ENCODE measurements at regions of chr9 and their contacts with region 1.

Region 1: GRCh38 chr9:103104101-103104500 is 109.0 kb downstream of the CYLC2 start:
- DNase-seq: no peak
- H3K4me3 ChIP-seq: no peak overlapping the region
- H3K27ac ChIP-seq: no peak overlapping the region
- H3K4me1 ChIP-seq: no peaks in the 10 kb centered on the region
- H3K27me3 ChIP-seq: no peaks in the 10 kb centered on the region
- CTCF ChIP-seq: no peak

Region 2: DNA sequence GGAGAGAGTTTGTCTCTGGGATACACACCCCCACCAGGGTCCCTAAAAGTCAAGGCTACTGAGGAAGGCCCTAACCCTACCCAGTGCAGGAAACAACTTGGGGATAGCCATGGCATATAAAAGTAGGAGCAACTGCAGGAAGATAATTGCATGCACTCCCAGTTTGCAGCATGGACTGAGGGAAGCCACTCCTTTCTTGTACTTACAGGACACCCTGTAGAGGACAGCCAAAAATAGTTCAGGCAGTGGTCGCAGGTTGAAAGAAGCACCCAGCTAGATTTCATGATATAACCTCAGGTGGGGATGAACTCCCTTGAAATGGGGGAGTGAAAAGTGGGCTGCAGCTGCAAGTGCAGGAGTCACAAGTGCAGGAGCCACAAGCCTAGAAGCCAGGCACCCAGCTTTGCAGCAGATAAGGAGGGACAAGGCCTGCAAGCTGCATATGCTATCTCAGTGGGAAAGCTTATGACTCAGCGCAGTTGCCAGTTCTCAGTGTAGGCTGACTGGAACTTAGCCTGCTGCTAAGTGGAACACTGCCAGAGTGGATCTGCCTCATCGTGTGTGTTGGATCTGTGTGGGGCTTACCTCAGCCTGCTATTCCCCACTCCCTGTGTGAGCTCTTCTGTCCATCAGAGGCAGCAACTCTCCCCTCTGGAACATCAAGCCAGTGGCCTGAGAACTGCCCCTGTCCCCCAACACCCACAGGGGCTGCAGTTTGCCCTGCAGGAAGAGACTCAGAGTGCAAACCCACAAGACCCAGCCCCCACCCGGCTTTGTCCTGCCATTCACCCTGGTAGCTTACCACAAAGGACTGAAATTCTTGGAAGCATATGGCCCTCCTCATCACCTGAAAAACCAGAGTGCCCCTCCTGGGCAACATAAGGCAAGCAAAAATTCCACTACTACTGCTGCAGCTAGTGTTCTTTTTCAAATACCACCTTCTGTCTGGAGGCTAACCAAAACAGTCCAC is 66.3 kb before region 1 on chr9:
- CTCF ChIA-PET with region 1: no interaction called
- POLR2A ChIA-PET with region 1: no interaction called
- intact Hi-C with region 1: loop called (anchors 10 kb)
- DNase-seq: no peak
- H3K4me3 ChIP-seq: no peak overlapping the region
- H3K27ac ChIP-seq: no peak overlapping the region
- H3K4me1 ChIP-seq: no peaks in the 10 kb centered on the region
- H3K27me3 ChIP-seq: no peaks in the 10 kb centered on the region
- CTCF ChIP-seq: no peak

Region 3: GRCh38 chr9:103242025-103242424 is 137.9 kb after region 1 on chr9:
- CTCF ChIA-PET with region 1: no interaction called
- POLR2A ChIA-PET with region 1: no interaction called
- intact Hi-C with region 1: no loop called
- DNase-seq: no peak
- H3K4me3 ChIP-seq: no peak overlapping the region
- H3K27ac ChIP-seq: no peak overlapping the region
- H3K4me1 ChIP-seq: no peaks in the 10 kb centered on the region
- H3K27me3 ChIP-seq: no peaks in the 10 kb centered on the region
- CTCF ChIP-seq: no peak

Measured in PC-9 (cell line).